Heart right ventricle (tissue), 16 donors: ENCODE measurements at regions of chr10 and their contacts with region 1.

Region 1: DNA sequence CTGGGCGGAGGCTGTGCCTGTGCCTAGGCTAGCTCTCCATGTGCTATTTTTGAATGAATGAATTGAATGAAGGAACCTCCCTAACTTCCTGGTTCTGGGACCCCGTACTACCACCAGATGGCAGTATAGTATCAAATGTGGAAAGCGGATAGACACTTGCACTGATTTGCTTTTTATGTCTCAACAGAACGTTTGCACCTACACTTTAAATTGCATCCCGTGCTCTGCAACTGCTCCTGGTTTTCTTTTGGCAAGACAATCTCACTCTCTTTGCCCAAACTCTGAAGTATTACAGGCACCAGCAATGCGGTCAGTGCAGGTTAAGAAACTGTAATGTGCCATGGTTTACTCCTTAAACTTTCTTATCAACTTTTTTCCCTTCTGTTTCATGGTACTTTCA is 6.5 kb downstream of the FZD8 start:
- DNase-seq: peak in 1 of 2 donors; percentile 48
- ATAC-seq: peak; percentile 27 to 74 (median 65)
- H3K4me3 ChIP-seq: no peak overlapping the region
- H3K27ac ChIP-seq: no peak overlapping the region
- H3K4me1 ChIP-seq: peaks cover 3 to 41% (median 24%) of the 10 kb centered on the region in 9 donors
- H3K27me3 ChIP-seq: peaks cover 0 to 46% (median 0%) of the 10 kb centered on the region in 7 donors
- CTCF ChIP-seq: peak; percentile 85 to 98 (median 90)

Region 2: DNA sequence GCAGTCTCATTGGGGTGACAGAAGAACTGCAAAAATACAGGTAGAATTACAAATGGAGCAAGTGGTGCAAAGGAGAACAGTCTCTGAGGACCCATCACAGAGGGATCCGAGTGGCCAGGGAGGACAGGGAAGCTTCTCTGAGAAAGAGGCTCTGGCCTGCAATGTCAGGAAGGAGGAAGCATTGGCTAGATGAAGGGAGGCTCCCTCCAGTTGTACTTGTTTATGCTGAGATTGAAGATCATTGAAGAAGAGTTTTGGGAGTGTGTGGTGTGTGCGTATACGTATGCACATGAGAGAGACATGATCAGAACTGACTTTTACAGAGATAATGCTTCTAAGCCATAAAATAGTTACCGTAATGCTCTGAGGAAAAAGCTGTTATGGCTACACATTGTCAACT is 281.2 kb after region 1 on chr10:
- intact Hi-C with region 1: loop called in 8 of 10 experiments (anchors 2 to 10 kb)
- DNase-seq: no peak
- ATAC-seq: peak in 3 of 8 donors; percentile 47 to 58 (median 47)
- H3K4me3 ChIP-seq: no peak overlapping the region
- H3K27ac ChIP-seq: no peak overlapping the region
- H3K4me1 ChIP-seq: peaks cover 0 to 14% (median 9%) of the 10 kb centered on the region in 9 donors
- H3K27me3 ChIP-seq: no peaks in the 10 kb centered on the region
- CTCF ChIP-seq: peak in 5 of 9 donors; percentile 12 to 48 (median 37)

Region 3: GRCh38 chr10:36254199-36254598 is 618.6 kb after region 1 on chr10:
- intact Hi-C with region 1: loop called in 2 of 10 experiments (anchors 5 to 10 kb)
- DNase-seq: peak; percentile 67 to 77
- ATAC-seq: peak in 7 of 8 donors; percentile 47 to 88 (median 80)
- H3K4me3 ChIP-seq: no peak overlapping the region
- H3K27ac ChIP-seq: no peak overlapping the region
- H3K4me1 ChIP-seq: peaks cover 0 to 27% (median 12%) of the 10 kb centered on the region in 9 donors
- H3K27me3 ChIP-seq: no peaks in the 10 kb centered on the region
- CTCF ChIP-seq: no peak

Region 4: GRCh38 chr10:36725581-36726520 is 1090.3 kb after region 1 on chr10:
- intact Hi-C with region 1: loop called in 2 of 10 experiments (anchors 5 kb)
- DNase-seq: peak in 1 of 2 donors; percentile 25
- ATAC-seq: peak; percentile 23 to 95 (median 62)
- H3K4me3 ChIP-seq: no peak overlapping the region
- H3K27ac ChIP-seq: no peak overlapping the region
- H3K4me1 ChIP-seq: peaks cover 0 to 7% (median 0%) of the 10 kb centered on the region in 9 donors
- H3K27me3 ChIP-seq: no peaks in the 10 kb centered on the region
- CTCF ChIP-seq: peak in 6 of 9 donors; percentile 26 to 49 (median 36)

Region 5: DNA sequence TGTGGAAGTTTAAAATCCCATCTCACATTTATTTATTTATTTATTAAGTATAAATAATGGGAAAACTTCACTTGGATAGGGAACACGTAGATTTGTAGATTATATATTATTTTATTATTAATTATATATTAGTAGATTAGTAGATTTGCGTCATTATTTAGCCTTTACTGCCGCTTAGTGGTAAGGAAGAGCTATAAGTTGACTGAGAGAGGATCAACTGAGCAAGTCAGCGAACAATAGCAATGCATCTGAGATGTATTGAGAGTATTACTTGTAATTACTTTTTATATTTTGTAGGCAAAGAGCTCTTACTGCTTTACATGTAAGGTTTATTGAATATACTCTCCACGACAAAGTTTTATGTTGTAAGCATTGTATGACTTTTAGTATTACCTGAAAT is 1245.3 kb after region 1 on chr10:
- intact Hi-C with region 1: loop called (anchors 2 to 10 kb)
- DNase-seq: no peak
- ATAC-seq: no peak
- H3K4me3 ChIP-seq: no peak overlapping the region
- H3K27ac ChIP-seq: no peak overlapping the region
- H3K4me1 ChIP-seq: no peaks in the 10 kb centered on the region
- H3K27me3 ChIP-seq: peaks cover 0 to 30% (median 0%) of the 10 kb centered on the region in 7 donors
- CTCF ChIP-seq: peak in 8 of 9 donors; percentile 9 to 67 (median 52)